Activated B cell treated with CpG ODN at 0.5 μM for 24 hours (primary cell): ENCODE measurements at regions of chr17 and their contacts with region 1.

Region 1: DNA sequence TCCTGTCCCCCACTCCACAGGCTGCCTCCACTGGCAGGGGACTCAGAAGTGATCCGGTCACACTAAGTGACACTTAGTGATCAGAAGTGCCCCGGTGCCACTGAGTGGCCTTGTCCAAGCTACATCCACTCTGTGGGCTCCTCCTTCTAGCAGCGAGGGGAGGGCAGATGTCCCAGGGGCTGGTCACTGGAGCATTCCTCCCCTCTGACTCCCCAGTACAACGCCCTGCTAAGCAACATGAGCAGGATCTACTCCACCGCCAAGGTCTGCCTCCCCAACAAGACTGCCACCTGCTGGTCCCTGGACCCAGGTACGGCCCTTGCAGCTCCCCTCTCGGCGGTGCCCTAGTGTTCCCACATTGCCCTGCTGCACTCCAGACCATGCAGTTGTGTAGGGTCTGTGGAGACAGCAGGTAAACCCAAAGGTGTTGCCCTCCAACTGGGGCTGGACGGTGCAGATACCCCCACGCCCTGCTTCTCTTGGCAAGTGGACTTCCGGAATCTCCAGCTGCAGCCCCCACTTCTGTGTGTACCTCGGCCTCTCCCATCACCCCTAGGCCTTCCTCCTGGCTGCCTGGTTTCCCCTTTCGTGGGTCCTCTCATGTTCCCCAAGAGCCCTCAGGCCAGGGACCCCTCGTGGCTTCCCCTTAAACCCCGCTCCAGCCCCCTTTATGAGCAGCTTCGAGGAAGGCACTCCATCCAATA is 2.1 kb downstream of the ACE start:
- DNase-seq: peak; percentile 59
- ATAC-seq: peak; percentile 80
- H3K4me3 Mint-ChIP-seq: peak overlapping the region; percentile 54
- H3K27ac Mint-ChIP-seq: no peak overlapping the region
- H3K4me1 Mint-ChIP-seq: peaks cover 17% of the 10 kb centered on the region
- H3K27me3 Mint-ChIP-seq: peaks cover 32% of the 10 kb centered on the region
- CTCF ChIP-seq: no peak

Region 2: GRCh38 chr17:63455417-63455816 is 23.5 kb before region 1 on chr17:
- CTCF ChIA-PET with region 1: interaction called, 13 read pairs
- POLR2A ChIA-PET with region 1: no interaction called
- intact Hi-C with region 1: no loop called
- DNase-seq: no peak
- ATAC-seq: no peak
- H3K4me3 Mint-ChIP-seq: no peak overlapping the region
- H3K27ac Mint-ChIP-seq: no peak overlapping the region
- H3K4me1 Mint-ChIP-seq: peaks cover 5% of the 10 kb centered on the region
- H3K27me3 Mint-ChIP-seq: peaks cover 2% of the 10 kb centered on the region
- CTCF ChIP-seq: no peak

Region 3: DNA sequence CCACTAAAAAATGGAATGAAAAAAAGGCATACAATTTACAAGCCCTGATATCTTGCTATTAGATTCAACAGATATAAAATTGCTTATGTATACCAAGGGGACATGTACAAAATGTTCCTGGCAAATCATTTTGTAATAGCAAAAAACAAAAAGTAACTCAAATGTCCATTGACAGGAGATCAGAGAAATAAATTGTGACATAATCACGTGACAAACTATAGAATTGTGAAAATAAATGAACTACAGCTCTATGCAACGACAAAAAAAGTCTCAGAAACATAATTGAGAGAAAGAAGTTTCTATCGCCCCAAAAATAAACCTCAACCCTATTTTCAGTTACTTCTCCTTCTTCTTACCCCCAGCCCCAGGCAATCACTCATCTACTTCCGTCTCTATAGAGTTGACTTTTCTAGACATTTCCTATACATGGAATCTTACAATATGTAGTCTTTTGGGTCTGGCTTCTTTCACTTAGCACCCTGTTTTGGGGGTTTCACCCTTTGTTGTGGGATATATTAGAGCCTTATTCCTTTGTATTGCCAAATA is 14.2 kb before region 1 on chr17:
- CTCF ChIA-PET with region 1: interaction called, 13 read pairs
- POLR2A ChIA-PET with region 1: interaction called, 3 read pairs
- intact Hi-C with region 1: loop called (anchors 2 kb)
- DNase-seq: no peak
- ATAC-seq: no peak
- H3K4me3 Mint-ChIP-seq: no peak overlapping the region
- H3K27ac Mint-ChIP-seq: peak overlapping the region; percentile 2
- H3K4me1 Mint-ChIP-seq: peaks cover 34% of the 10 kb centered on the region
- H3K27me3 Mint-ChIP-seq: peaks cover 2% of the 10 kb centered on the region
- CTCF ChIP-seq: no peak

Region 4: DNA sequence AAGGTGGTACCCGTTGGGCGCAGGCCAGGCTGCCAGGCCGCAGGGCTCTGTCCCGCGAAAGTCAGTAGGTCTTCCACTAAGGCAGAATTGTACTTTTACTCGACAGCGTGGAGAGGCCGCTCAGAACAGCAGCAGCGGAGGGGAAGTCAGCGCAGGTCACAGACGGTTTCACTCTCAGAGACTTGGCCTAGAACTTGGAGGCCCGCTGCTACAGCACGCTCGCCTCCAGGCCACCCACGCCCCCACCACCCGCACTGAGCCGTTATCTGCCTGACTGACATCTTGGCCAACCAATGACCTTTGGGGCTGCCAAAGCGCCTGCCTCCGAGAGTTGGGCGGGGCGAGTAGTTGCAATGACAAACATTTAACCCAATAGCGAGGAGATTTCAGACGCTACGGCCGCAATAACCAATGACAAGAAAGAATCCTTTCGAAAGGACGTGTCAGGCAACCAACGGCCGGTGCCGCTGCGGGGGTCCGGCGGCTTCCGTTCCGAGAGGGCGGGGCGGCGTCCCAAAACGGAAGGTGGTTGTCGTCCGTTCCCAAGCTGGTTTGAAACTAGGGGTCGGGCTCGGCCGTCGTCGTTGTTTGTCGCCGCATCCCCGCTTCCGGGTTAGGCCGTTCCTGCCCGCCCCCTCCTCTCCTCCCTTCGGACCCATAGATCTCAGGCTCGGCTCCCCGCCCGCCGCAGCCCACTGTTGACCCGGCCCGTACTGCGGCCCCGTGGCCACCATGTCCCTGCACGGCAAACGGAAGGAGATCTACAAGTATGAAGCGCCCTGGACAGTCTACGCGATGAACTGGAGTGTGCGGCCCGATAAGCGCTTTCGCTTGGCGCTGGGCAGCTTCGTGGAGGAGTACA is 71.2 kb after region 1 on chr17 and contains the start of gene DCAF7:
- CTCF ChIA-PET with region 1: no interaction called
- POLR2A ChIA-PET with region 1: no interaction called
- intact Hi-C with region 1: loop called (anchors 2 kb)
- DNase-seq: peak; percentile 94
- ATAC-seq: peak; percentile 94
- H3K4me3 Mint-ChIP-seq: peak within 1 kb of the TSS; percentile 99
- H3K27ac Mint-ChIP-seq: peak within 1 kb of the TSS; percentile 95
- H3K4me1 Mint-ChIP-seq: peaks cover 56% of the 10 kb centered on the region
- H3K27me3 Mint-ChIP-seq: no peaks in the 10 kb centered on the region
- CTCF ChIP-seq: no peak
- total RNA-seq, gene DCAF7: 91.9 and 103 TPM in 2 replicates

Region 5: GRCh38 chr17:63634163-63634562 is 155.2 kb after region 1 on chr17:
- CTCF ChIA-PET with region 1: no interaction called
- POLR2A ChIA-PET with region 1: no interaction called
- intact Hi-C with region 1: no loop called
- DNase-seq: no peak
- ATAC-seq: no peak
- H3K4me3 Mint-ChIP-seq: no peak overlapping the region
- H3K27ac Mint-ChIP-seq: no peak overlapping the region
- H3K4me1 Mint-ChIP-seq: peaks cover 5% of the 10 kb centered on the region
- H3K27me3 Mint-ChIP-seq: no peaks in the 10 kb centered on the region
- CTCF ChIP-seq: no peak